Spleen (tissue), 13 donors: ENCODE measurements at regions of chr2 and their contacts with region 1.

Region 1: DNA sequence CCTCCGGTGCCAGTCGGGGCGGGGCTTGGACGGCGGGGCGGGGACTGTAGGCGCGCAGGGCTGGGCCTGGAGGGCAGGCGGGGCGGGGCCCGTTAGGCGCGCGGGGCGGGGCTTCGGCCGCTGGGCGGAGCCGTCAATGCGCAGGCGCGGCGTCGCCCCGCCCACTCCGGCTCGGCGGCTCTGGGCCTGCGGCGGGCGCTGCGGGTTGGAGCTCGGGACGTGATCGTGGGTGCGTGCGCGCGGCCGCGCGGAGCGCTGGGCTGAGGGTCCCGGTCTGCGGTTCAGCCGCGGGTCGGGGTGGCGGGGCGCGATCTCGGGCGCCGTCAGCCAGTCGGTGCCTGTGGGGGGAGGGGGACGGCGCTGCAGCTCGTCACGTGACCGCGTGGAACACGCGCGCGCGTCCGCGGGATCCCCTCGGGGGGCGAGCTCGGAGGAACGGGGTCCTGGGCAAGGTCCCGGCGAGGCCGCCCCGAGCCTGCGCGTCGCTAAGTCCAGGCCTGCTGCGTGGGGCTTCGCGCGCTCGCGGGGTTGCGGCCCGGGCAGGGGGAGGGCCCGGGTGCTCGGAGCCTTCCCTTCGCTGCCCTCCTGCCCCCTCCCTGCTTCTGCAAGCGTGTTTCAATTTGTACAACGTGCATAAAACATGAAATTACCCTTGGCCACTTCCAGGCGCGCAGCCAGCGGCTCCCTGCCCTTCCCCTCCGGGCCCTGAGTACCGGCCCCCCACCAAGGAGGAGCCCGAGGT is at the start of gene D2HGDH:
- DNase-seq: peak; percentile 99
- H3K4me3 ChIP-seq: peak within 1 kb of the TSS; percentile 75 to 99 (median 92)
- H3K27ac ChIP-seq: peak within 1 kb of the TSS; percentile 89 to 96 (median 94)
- H3K4me1 ChIP-seq: peaks cover 4 to 86% (median 42%) of the 10 kb centered on the region in 6 donors
- H3K27me3 ChIP-seq: no peaks in the 10 kb centered on the region
- CTCF ChIP-seq: peak in 3 of 11 experiments; percentile 1 to 4 (median 1)
- POLR2A ChIP-seq: peak in 2 of 3 donors; percentile 30 to 76
- total RNA-seq, gene D2HGDH: 18.8 to 51.5 (median 32.3) TPM

Region 2: DNA sequence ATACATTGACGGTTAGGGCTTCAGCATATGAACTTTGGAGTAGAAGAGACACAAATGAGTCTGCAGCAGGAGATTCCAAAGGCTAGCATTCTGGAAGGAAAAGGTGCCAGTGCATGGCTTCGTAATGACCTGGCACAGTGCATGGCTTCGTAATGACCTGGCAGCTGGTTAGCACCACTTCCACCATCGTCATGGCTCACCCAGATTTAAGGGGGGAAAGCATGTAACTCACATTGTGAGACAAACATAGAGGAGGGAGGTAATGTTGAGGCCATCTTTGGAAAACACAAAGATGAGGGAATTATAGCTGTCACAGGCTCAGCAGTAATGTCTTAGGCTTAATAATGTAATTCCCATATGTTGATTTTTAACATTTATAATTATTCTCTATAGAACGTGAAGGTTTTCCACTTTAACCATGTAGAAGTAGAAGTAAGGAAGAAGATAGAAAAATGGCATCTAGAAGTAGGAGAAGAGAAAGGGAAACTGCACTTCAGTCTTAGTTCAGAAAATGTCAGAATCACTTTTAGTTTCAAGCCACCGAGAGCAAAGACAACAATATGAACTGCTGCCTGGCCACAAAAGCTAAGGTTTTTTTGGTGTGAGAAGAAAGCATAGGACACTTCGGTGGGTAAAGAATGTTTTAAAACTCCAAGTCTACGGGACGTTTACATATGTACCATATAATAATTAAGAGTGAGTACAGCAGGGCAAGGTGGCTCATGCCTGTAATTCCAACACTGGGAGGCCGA is 219.5 kb before region 1 on chr2:
- intact Hi-C with region 1: no loop called
- DNase-seq: no peak
- H3K4me3 ChIP-seq: no peak overlapping the region
- H3K27ac ChIP-seq: peak overlapping the region in 2 of 8 donors; percentile 4 to 11
- H3K4me1 ChIP-seq: peaks cover 0 to 9% (median 0%) of the 10 kb centered on the region in 6 donors
- H3K27me3 ChIP-seq: peaks cover 0 to 12% (median 0%) of the 10 kb centered on the region in 7 donors
- CTCF ChIP-seq: no peak
- POLR2A ChIP-seq: no peak

Region 3: DNA sequence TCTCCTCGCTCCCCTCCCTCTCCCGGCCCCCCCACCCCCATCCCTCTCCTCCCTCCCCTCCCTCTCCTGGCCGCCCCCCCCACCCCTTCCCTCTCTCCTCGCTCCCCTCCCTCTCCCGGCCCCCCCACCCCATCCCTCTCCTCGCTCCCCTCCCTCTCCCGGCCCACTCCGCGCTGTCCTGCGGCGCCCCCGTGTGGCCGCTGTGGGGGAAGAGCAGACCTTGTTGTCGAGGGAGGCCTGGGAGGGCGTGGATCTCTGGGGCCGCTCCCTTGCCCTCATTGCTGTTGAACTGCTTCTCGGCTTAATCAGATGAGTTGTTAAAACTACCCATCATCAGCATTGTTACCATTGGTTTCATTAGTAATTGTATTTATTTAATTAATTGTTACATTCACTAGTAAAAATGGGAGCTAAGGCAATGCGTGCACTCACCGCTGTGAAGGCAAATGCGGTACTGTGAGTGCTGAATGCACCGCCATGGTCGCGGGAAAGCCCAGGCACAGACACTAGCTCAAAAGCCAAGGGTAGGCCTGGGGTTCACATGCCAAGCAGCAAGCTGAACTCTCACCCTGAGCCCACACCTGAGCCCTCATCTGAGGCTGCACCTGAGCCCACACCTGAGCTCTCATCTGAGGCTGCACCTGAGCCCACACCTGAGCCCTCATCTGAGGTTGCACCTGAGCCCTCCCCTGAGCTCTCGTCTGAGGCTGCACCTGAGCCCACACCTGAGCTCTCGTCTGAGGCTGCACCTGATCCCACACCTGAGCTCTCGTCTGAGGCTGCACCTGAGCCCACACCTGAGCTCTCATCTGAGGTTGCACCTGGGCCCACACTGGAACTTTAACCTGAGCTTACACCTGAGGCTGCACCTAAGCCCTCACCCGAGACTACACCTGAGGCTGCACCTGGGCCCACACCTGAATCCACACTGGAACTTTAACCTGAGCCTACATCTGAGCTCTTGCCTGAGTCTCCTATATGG is 143.6 kb after region 1 on chr2:
- intact Hi-C with region 1: loop called (anchors 10 kb)
- DNase-seq: peak; percentile 93
- H3K4me3 ChIP-seq: no peak overlapping the region
- H3K27ac ChIP-seq: no peak overlapping the region
- H3K4me1 ChIP-seq: peaks cover 12 to 36% (median 31%) of the 10 kb centered on the region in 6 donors
- H3K27me3 ChIP-seq: no peaks in the 10 kb centered on the region
- CTCF ChIP-seq: peak; percentile 36 to 86 (median 68)
- POLR2A ChIP-seq: no peak